Heart right ventricle (tissue), 16 donors: ENCODE measurements at regions of chr10 and their contacts with region 1.

Region 1: DNA sequence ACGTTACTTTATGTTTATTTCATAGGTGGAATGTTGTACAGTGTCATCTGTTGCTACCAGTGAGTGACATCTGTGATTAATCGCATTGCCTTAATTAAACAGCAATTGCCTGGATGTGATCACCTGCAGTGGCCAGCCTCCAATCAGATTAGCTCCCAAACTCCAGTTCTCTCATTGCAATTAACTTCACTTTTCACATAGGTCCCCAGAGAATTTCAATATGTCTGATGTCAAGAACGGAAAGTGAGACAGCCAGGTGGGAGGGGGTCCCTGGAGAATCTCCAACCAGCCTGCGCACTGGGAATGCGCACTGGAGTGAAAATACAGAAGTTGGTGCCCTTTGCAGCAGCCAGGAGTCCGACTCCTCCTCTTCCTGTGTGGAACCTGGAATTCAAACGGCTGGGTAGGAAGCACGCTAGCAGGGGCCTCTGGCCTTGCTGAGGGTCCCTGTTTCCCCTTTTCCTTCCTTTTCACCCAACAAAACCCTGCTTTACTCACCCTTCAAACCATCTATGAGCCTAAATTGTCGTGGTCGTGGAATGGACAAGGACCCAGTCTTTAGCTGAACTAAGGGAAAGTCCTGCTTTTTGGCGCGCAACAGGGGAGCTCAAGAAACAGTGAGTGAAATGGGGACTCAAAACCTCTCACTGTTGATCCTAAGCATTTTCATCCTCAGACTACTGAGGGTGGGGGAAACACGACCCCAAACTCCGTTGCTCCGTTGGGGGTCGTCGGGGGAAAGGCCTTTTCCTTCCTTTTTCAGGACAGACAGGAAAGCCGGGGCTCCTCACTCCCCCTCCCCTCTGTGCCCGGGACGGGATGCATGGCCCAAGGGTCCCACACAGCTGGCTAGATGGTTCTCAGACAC is 1355.5 kb upstream of the LRRTM3 start:
- DNase-seq: peak; percentile 39 to 41
- ATAC-seq: peak; percentile 76 to 95 (median 89)
- H3K4me3 ChIP-seq: peak overlapping the region; percentile 40 to 66 (median 59)
- H3K27ac ChIP-seq: peak overlapping the region in 9 of 10 donors; percentile 10 to 76 (median 42)
- H3K4me1 ChIP-seq: peaks cover 0 to 9% (median 0%) of the 10 kb centered on the region in 9 donors
- H3K27me3 ChIP-seq: no peaks in the 10 kb centered on the region
- CTCF ChIP-seq: peak in 3 of 9 donors; percentile 6 to 16 (median 15)

Region 2: DNA sequence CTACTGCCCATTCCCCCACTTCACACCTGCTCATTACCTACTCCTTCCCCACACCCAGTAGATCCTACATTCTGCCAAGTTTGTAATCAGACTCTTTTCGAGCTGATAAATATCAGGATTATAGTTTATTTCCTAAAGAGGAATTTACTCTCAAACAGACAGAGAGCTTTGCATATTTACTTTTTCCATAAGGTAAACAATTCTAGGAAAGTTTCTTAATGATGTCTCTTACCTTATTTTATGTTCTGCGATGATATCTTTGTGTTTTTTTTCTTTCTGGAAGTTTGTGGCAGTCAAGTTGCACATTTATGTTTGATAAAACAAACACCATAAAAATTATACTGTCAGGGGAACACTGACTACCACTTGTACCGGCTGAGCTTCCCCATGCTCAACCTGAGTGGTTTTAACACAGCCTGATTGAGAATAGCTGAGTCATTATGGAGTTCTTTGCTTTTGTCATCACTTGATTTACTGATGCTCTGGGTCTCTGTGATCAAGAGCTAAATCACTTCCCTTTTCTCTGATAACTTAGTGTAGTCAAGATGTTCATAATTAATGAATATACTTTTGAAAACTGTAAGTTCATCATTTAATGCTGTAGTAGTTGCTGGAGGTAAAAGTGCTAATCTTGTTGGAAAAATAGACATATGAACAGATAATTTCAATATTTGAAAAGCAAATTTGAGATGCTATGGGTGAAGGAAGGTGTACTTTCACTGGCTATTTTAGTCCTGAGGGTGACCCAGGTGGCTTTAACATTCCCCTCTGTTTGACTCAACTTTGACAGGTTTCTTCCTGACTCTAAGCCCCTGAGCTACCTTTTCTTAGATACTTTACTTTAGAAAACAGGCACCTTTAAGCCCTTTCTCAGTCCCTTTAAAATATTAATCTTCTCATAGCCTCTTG is 320.9 kb after region 1 on chr10:
- intact Hi-C with region 1: loop called in 1 of 10 experiments (anchors 10 kb)
- DNase-seq: no peak
- ATAC-seq: no peak
- H3K4me3 ChIP-seq: no peak overlapping the region
- H3K27ac ChIP-seq: no peak overlapping the region
- H3K4me1 ChIP-seq: no peaks in the 10 kb centered on the region
- H3K27me3 ChIP-seq: no peaks in the 10 kb centered on the region
- CTCF ChIP-seq: no peak